Astrocyte of the cerebellum (primary cell): ENCODE measurements at regions of chr2 and their contacts with region 1.

Region 1: DNA sequence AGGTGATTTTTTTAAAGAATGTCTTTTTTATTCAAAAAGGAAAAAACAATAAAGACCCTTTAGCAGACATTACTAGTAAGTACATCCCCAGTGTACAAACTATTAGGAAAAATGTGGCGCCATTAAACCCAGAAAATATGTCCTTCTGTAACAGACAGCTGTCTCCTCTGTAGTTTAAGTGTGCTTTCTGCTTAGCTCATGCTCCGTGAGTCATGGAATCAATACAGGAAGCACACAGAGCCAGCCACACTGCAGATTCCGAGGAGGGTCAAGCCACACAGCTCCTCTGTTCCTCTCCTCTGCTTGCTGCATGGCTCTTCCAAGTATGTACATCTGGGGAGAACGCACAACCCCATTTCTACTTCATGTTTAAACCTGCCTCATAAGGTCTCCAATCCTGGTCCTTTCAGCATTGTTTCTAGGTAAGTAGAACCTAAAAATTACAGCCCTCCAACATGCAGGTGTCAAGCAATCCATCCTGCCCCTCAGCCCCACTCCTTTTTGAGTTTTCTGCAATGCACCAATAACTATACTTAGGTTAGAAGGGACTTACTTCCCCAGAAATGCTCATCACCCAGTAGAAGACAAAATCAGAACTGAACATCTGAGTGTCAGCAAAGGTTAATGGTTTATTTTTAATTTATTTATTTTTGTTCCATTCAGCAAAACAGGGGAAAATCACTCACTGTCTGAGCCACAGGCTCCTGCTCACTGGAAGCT is 37.5 kb downstream of the ACVR1 start:
- DNase-seq: no peak
- H3K4me3 ChIP-seq: no peak overlapping the region
- CTCF ChIP-seq: no peak

Region 2: DNA sequence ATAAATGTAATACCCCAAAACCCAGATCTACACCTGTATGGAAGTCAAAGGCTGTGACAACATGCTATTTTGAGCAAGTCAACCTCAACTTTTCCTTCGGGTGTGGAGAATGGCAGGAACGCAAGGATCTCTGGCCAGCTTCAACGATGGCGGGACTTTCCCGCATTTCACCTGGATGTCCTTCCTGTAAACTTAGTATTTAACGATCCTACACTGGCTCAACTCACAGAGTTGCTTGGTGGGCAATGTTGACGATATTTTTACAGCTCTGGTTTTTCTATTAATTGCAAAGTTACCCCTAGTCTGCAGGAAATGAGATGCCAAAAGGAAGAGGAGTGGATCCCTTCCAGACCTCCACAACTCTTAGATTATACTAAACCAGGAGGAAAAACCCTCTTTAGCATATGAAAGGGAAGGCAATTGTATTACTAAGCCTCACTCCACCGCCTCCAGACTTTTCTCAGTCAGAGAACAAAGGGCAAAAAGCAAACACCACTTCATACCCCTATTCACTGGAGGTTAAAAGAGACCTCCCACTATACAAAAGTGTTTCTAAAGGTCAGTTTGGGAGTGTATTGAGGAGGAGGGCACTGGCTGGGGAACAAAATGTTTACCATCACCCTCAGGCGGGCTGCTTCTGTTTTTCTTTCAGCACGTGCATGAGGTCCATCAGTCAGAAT is 94.0 kb after region 1 on chr2:
- in situ Hi-C with region 1: loop called (anchors 5 kb)
- DNase-seq: no peak
- H3K4me3 ChIP-seq: no peak overlapping the region
- CTCF ChIP-seq: no peak

Region 3: GRCh38 chr2:158633261-158633660 is 794.7 kb after region 1 on chr2:
- in situ Hi-C with region 1: no loop called
- DNase-seq: no peak
- H3K4me3 ChIP-seq: no peak overlapping the region
- CTCF ChIP-seq: no peak